HEK293T (cell line): ENCODE measurements at regions of chr6 and their contacts with region 1.

Region 1: DNA sequence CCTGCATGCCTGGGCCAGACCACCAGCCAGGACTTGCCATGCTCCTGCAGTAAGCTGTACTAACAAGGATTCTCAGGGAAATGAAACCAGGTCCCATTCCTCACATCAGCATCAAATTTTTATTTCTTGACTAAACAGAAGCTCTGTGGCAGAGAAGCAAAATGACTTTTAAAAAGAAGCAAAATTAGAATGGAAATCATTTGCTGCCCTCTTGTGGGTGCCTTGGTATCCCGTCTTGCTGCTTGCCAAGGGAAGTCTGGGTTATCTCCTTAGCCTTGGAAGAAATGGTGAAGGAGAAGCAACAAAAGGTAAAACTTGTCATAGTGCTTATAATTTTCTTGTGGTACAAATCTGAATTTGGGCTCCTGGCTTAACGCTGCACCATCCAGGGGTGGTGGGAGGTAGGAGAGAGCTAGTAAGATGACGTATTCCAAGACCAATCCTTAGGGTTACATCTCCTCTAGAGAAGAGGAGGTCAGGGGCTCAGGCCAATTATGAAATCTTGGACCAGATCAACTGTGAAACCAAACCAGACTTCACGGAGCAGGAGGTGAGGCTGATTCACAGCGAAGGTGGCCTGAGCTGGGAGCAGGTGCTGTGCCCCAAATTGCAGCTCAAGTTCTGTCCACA is 107.5 kb downstream of the FAXC start:
- DNase-seq: peak; percentile 53

Region 2: DNA sequence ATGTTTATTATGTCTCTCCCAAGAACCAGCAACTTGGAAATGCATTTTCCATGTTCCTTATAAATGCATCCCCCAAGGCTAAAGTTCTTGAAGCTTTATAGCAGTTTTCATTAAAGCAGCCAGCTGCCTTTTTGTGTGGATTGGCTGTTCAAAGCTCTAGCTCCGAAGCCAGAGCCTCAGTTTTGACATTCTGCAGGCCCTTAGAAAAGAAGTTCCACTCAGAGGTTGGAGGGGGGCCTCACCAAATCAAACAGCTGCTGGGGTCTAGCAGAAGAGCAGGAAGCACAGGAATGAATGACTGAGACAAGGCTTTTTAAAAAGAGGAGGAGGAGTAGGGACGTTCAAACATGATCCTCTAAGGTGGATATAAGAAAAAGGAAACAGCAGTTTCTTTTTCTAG is 411.9 kb before region 1 on chr6:
- CTCF ChIA-PET with region 1: interaction called, 13 read pairs
- POLR2A ChIA-PET with region 1: no interaction called
- DNase-seq: no peak

Region 3: GRCh38 chr6:99151634-99152344 is 90.2 kb before region 1 on chr6:
- CTCF ChIA-PET with region 1: interaction called, 24 read pairs
- POLR2A ChIA-PET with region 1: no interaction called
- DNase-seq: peak; percentile 67

Region 4: GRCh38 chr6:99424761-99425646 is 183.0 kb after region 1 on chr6 and contains the start of gene PNISR:
- CTCF ChIA-PET with region 1: no interaction called
- POLR2A ChIA-PET with region 1: no interaction called
- DNase-seq: peak; percentile 85